ENCODE measurements at regions of chr5 and their contacts with region 1.

Region 1: DNA sequence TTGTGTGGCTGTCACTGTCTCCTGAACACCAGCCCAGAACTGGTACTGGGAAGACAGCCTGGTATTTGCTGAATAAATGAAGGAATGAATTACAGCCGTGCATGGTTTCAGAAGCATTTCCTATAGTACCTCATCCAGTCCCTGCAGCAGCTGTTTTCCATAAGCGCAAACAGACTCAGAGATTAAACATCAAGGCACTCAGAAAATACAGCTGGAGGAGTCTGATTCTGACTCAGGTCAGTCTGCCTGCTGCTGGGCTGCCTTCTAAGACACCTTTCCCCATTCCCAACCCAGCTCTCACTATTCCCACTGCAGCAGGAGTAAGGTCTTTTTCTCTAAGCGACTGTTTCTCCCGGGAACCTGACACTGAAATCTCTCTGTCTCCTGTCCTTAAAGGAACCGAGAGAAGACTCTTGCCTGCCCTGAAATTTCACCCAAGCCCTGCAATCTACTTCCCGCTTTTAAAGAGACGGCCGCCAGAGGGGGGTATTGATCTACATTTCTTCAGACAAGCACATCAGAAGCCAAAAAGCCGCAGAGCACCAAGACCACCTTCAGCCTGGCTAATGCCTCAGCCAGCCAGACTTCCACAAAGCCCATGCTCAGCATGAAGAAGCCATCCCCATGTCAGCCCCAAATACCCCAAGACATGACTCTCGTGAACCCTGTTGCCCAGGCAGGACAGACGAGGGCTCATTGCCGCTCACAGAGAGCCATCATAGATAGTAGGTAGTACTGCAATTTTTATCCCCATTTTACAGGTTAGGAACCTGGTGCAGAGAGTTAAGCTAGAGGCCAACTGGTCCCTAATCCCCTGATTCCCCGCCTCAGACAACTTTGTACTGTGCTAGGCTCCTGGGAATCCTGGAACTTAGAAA is 5.4 kb upstream of the FOXI1 start:
- DNase-seq: peak; percentile 36
- ATAC-seq: peak; percentile 88
- H3K4me3 ChIP-seq: no peak overlapping the region
- H3K27ac ChIP-seq: peak overlapping the region; percentile 91
- H3K4me1 ChIP-seq: peaks cover 33% of the 10 kb centered on the region
- H3K27me3 ChIP-seq: no peaks in the 10 kb centered on the region
- CTCF ChIP-seq: peak; percentile 79

Region 2: DNA sequence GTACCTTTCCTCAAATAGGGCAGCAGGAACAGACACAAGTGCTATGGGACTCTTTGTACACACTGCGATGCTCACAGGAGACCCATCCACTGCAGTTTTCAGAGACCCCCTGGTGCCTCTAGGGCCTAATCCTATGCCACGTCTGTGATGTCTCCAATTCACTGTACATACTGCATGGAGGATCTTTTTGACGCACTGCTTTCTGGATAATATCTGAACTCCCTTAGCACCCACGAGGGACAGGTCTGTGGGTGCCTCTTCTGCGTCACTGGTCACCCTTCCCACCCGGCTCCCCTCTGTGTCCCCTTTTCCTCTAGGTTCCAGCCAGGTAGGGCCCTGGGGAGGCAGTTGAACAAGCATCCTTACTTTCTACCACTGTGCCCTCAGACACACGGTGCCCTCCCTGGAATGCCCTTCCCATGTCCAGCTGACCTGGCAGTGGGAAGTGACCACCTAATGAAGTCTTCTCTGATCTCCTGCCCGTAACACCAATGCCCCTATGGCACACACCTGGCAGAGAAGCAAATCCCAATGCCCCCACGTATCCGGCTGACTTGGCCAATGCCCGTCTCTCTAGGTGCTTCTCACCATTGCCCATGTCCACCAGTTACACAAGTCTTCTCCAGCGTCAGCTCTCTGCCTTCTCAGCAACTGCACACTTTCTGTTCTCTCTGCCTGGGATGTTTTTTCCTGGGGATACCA is 46.9 kb after region 1 on chr5:
- CTCF ChIA-PET with region 1: no interaction called
- POLR2A ChIA-PET with region 1: no interaction called
- in situ Hi-C with region 1: no loop called
- intact Hi-C with region 1: no loop called
- DNase-seq: no peak
- ATAC-seq: no peak
- H3K4me3 ChIP-seq: no peak overlapping the region
- H3K27ac ChIP-seq: peak overlapping the region; percentile 97
- H3K4me1 ChIP-seq: peaks cover 12% of the 10 kb centered on the region
- H3K27me3 ChIP-seq: no peaks in the 10 kb centered on the region
- CTCF ChIP-seq: no peak

Region 3: GRCh38 chr5:170159101-170159698 is 58.9 kb after region 1 on chr5:
- CTCF ChIA-PET with region 1: no interaction called
- POLR2A ChIA-PET with region 1: no interaction called
- in situ Hi-C with region 1: no loop called
- intact Hi-C with region 1: no loop called
- DNase-seq: no peak
- ATAC-seq: 0 out of 2 replicates have a peak, but pooled peaks have one; percentile 46
- H3K4me3 ChIP-seq: no peak overlapping the region
- H3K27ac ChIP-seq: peak overlapping the region; percentile 84; the same call in 1 of the 2 replicates
- H3K4me1 ChIP-seq: peaks cover 12% of the 10 kb centered on the region
- H3K27me3 ChIP-seq: no peaks in the 10 kb centered on the region
- CTCF ChIP-seq: no peak

Region 4: DNA sequence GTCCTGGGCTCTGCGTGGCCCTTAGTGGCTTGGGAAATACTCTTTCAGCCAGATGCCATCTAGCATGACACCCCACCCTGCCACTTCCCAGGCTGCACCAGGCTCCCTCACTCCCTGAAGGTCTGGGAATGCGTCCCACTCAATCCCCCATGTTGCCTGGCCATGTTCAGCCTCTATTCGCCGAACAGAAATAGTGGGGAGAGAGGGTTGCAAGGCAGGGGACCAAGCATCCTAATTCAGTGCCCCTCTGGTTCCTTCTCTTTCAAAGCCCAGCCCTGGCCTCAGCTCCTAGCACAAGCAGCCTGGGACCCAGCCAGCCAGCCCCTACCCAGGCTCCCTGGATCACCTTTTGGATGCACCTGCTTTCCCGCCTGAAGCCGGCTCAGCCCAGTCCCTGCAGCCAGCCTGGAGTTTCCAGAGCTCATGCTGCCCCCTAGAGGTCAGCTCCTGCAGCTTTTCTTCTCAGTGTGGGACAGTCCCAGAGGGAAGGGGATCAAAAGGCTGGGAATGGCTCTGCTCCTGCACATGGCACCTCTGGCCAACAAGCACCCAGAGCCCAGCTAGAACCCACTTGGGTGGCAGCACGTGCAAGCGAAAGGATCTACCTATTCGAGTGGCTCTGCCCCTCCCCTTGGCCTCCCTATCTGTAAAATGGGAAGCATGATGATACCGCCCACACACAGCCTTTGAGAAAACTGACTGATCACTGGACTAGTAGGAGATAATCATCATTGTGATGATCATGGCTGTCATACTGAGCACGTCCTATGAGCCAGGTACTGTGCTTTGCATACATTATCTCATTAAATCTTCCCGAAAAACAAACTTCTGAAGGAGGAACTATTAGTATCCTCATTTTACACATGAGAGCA is 83.7 kb after region 1 on chr5:
- CTCF ChIA-PET with region 1: interaction called, 6 read pairs
- POLR2A ChIA-PET with region 1: interaction called, 3 read pairs
- in situ Hi-C with region 1: no loop called
- intact Hi-C with region 1: loop called (anchors 1 kb)
- DNase-seq: peak; percentile 18
- ATAC-seq: peak; percentile 94
- H3K4me3 ChIP-seq: no peak overlapping the region
- H3K27ac ChIP-seq: peak overlapping the region; percentile 80
- H3K4me1 ChIP-seq: peaks cover 42% of the 10 kb centered on the region
- H3K27me3 ChIP-seq: no peaks in the 10 kb centered on the region
- CTCF ChIP-seq: peak; percentile 90

Region 5: DNA sequence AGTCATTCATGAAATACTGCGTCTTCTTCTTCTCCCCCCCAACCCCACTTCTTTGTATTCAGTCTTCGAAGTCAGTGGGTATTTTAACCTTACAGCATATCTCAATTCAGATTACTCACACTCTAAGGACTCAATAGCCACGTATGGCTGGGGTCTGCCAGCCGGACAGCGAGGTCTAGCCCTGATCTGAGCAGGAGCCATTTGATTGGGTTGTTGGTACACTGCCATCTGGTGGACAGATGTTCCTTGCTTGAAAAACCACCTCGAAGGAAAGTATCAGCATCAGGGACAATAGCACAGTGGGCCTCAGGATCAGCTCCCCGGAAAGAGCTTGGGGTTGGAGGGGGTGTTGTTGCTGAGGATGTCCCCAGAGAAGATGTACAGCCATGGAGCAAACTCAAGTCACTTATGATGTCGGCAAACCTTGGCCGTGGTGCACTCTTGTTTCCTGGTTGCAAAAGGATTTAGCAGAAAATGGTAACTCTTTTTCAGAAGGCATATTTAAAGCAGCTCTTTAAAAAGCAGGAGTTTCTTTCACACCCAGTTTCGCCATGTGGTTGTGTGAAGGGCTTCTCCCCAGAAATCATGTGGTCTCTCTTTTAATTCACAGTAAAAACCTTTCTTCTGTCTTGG is 320.6 kb after region 1 on chr5:
- CTCF ChIA-PET with region 1: no interaction called
- POLR2A ChIA-PET with region 1: no interaction called
- in situ Hi-C with region 1: no loop called
- intact Hi-C with region 1: loop called (anchors 2 kb)
- DNase-seq: peak; percentile 25
- ATAC-seq: peak; percentile 88; the same call in 1 of the 2 replicates
- H3K4me3 ChIP-seq: no peak overlapping the region
- H3K27ac ChIP-seq: no peak overlapping the region
- H3K4me1 ChIP-seq: no peaks in the 10 kb centered on the region
- H3K27me3 ChIP-seq: no peaks in the 10 kb centered on the region; the same call in none of the 2 replicates
- CTCF ChIP-seq: peak; percentile 81

Measured in Panc1 (cell line).